CD4-positive, alpha-beta T cell (primary cell): ENCODE measurements at regions of chr2 and their contacts with region 1.

Region 1: GRCh38 chr2:12051831-12052230 is 305.4 kb downstream of the LPIN1 start:
- DNase-seq: no peak
- ATAC-seq: no peak
- H3K4me3 ChIP-seq: no peak overlapping the region
- H3K4me3 Mint-ChIP-seq: no peak overlapping the region
- H3K27ac ChIP-seq: no peak overlapping the region
- H3K27ac Mint-ChIP-seq: no peak overlapping the region
- H3K4me1 ChIP-seq: peaks cover 7% of the 10 kb centered on the region
- H3K4me1 Mint-ChIP-seq: peaks cover 32% of the 10 kb centered on the region
- H3K27me3 ChIP-seq: no peaks in the 10 kb centered on the region
- H3K27me3 Mint-ChIP-seq: no peaks in the 10 kb centered on the region
- CTCF ChIP-seq: no peak

Region 2: DNA sequence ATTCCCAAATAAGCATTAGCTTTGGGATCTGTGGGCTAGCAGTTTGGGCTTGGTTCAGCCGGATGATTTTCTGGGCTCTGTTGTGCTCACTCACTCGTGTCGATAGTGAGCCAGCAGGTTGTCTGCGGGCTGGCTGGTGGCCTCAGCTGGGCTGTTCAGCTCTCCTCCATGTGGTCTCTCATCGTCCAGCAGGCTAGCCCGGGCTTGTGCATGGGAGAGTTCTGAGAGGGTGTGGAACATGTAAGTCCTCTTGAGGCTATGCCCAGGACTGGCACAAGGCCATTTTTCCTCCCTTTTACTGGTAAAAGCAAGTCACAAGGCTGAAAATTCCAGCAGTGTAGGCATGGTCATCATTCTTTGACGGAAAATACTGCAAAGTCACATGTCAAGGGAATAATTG is 420.4 kb before region 1 on chr2:
- CTCF ChIA-PET with region 1: no interaction called
- POLR2A ChIA-PET with region 1: no interaction called
- intact Hi-C with region 1: no loop called
- DNase-seq: no peak
- ATAC-seq: no peak
- H3K4me3 ChIP-seq: no peak overlapping the region
- H3K4me3 Mint-ChIP-seq: no peak overlapping the region
- H3K27ac ChIP-seq: no peak overlapping the region
- H3K27ac Mint-ChIP-seq: no peak overlapping the region
- H3K4me1 ChIP-seq: no peaks in the 10 kb centered on the region
- H3K4me1 Mint-ChIP-seq: no peaks in the 10 kb centered on the region
- H3K27me3 ChIP-seq: no peaks in the 10 kb centered on the region
- H3K27me3 Mint-ChIP-seq: no peaks in the 10 kb centered on the region
- CTCF ChIP-seq: no peak

Region 3: GRCh38 chr2:11863513-11864328 is 188.1 kb before region 1 on chr2:
- CTCF ChIA-PET with region 1: no interaction called
- POLR2A ChIA-PET with region 1: no interaction called
- intact Hi-C with region 1: no loop called
- DNase-seq: peak; percentile 50 to 86 (median 58)
- ATAC-seq: peak; percentile 83
- H3K4me3 ChIP-seq: peak overlapping the region; percentile 24
- H3K4me3 Mint-ChIP-seq: peak overlapping the region; percentile 18
- H3K27ac ChIP-seq: no peak overlapping the region
- H3K27ac Mint-ChIP-seq: no peak overlapping the region
- H3K4me1 ChIP-seq: peaks cover 15% of the 10 kb centered on the region
- H3K4me1 Mint-ChIP-seq: peaks cover 18% of the 10 kb centered on the region
- H3K27me3 ChIP-seq: no peaks in the 10 kb centered on the region
- H3K27me3 Mint-ChIP-seq: no peaks in the 10 kb centered on the region
- CTCF ChIP-seq: peak; percentile 97

Region 4: DNA sequence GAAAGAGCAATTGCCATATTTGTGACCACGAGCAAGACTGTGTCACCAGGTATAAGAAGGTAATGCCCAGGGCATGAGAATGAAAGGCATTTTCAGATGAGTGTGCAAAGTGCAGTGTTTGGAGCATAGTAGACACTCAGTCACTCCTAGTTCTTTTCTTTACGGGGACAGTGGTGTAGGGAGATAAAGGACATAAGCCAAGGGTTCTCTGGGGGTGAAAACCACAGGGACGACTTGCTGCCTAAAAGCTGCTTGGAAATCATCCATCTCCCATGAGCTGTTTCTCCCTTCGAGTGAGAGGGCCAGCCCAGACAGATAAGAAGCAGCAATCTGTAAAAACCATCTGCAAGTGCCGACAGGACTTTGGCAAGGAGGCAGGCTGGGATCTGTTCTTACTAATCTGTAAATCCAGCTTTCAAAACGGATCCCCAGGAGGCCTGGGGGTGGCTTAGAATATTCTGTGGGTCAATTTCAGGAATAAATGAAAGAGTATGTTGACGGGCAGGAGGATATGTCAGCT is 83.8 kb before region 1 on chr2:
- CTCF ChIA-PET with region 1: no interaction called
- POLR2A ChIA-PET with region 1: no interaction called
- intact Hi-C with region 1: no loop called
- DNase-seq: no peak
- ATAC-seq: no peak
- H3K4me3 ChIP-seq: no peak overlapping the region
- H3K4me3 Mint-ChIP-seq: no peak overlapping the region
- H3K27ac ChIP-seq: no peak overlapping the region
- H3K27ac Mint-ChIP-seq: no peak overlapping the region
- H3K4me1 ChIP-seq: no peaks in the 10 kb centered on the region
- H3K4me1 Mint-ChIP-seq: no peaks in the 10 kb centered on the region
- H3K27me3 ChIP-seq: no peaks in the 10 kb centered on the region
- H3K27me3 Mint-ChIP-seq: no peaks in the 10 kb centered on the region
- CTCF ChIP-seq: no peak

Region 5: DNA sequence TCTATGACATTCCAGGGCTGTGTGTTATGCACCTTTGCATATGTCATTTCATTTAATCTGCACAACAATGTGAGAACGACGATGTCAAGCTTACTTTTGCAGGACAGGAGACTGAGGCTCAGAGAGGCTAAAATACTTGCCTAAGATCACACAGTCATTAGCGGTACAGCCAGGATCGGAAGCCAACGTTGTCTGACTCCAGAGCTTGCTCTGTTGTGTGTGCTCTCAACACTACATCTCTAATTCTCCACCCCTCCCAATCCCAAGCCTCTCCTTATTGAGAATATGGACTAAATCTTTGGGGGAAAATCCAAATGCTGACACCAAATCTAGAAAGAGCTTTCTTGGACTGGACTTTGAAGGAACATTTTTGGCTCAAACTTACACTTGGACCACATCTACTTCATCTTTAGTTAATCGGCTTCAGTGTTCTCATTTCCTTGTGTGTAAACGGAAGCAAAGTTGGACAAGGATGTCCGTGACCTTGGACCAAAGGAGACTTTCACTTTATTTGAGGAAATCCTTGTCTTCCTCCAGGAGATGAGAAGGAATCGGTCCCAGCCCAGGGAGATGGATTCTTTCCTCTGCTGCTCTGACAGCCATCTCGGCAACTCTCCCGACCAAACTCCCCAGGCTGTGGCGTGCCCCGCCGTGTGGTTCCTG is 63.0 kb before region 1 on chr2:
- CTCF ChIA-PET with region 1: no interaction called
- POLR2A ChIA-PET with region 1: no interaction called
- intact Hi-C with region 1: no loop called
- DNase-seq: no peak
- ATAC-seq: no peak
- H3K4me3 ChIP-seq: no peak overlapping the region
- H3K4me3 Mint-ChIP-seq: no peak overlapping the region
- H3K27ac ChIP-seq: no peak overlapping the region
- H3K27ac Mint-ChIP-seq: no peak overlapping the region
- H3K4me1 ChIP-seq: no peaks in the 10 kb centered on the region
- H3K4me1 Mint-ChIP-seq: no peaks in the 10 kb centered on the region
- H3K27me3 ChIP-seq: peaks cover 0 to 3% of the 10 kb centered on the region in 2 experiments
- H3K27me3 Mint-ChIP-seq: no peaks in the 10 kb centered on the region
- CTCF ChIP-seq: no peak

Region 6: GRCh38 chr2:12080360-12080759 is 28.5 kb after region 1 on chr2:
- CTCF ChIA-PET with region 1: no interaction called
- POLR2A ChIA-PET with region 1: no interaction called
- intact Hi-C with region 1: loop called in 1 of 2 experiments (anchors 1 kb)
- DNase-seq: no peak
- ATAC-seq: no peak
- H3K4me3 ChIP-seq: no peak overlapping the region
- H3K4me3 Mint-ChIP-seq: no peak overlapping the region
- H3K27ac ChIP-seq: no peak overlapping the region
- H3K27ac Mint-ChIP-seq: peak overlapping the region; percentile 4
- H3K4me1 ChIP-seq: peaks cover 20% of the 10 kb centered on the region
- H3K4me1 Mint-ChIP-seq: peaks cover 33% of the 10 kb centered on the region
- H3K27me3 ChIP-seq: no peaks in the 10 kb centered on the region
- H3K27me3 Mint-ChIP-seq: no peaks in the 10 kb centered on the region
- CTCF ChIP-seq: no peak